Naive thymus-derived CD4-positive, alpha-beta T cell (primary cell): ENCODE measurements at regions of chr5 and their contacts with region 1.

Region 1: DNA sequence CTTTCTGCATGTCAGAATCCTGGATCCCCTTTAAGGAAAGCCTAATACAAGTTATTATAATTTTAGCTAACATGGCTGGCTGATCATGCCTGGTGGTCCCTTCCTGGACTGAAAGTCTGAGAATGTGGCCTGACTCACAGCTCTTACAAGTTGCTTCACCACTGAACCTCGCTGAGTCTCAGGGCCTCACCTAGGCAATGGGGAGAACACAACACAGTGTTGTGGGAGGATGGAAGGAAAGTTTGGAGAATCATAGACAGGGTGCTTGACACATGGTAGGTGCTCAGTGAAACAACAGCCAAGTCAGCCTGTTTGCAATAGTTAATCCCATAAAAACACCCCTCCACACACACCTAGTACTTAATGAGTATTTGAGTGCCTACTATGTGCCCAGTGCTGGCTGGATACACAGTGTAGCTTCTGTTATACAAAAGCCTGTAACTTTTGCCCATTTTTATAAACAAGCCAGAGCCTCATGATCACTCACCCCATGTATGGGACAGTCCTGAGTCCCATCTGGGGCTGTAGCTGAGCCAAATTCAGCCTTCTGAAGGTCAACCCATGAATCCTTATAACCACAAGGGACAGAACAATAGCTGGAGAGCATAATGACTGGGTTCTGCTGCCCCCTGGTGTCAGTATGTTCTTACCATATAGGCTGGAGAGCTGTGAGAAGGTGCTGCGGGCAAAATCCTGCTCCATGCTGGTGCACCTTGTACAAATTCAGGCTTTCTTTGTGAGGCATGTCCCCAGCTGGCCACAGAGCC is 3.9 kb downstream of the ACSL6 start:
- DNase-seq: peak; percentile 47 to 73 (median 64)
- ATAC-seq: peak; percentile 74
- H3K4me3 ChIP-seq: no peak overlapping the region
- H3K4me3 Mint-ChIP-seq: peak overlapping the region in 1 of 10 donors; percentile 3
- H3K27ac ChIP-seq: no peak overlapping the region
- H3K27ac Mint-ChIP-seq: peak overlapping the region in 2 of 9 donors; percentile 3 to 43
- H3K4me1 ChIP-seq: peaks cover 3 to 7% of the 10 kb centered on the region in 2 donors
- H3K4me1 Mint-ChIP-seq: peaks cover 19 to 39% (median 20%) of the 10 kb centered on the region in 7 donors
- H3K27me3 ChIP-seq: no peaks in the 10 kb centered on the region
- H3K27me3 Mint-ChIP-seq: peaks cover 4 to 47% (median 18%) of the 10 kb centered on the region in 5 donors

Region 2: DNA sequence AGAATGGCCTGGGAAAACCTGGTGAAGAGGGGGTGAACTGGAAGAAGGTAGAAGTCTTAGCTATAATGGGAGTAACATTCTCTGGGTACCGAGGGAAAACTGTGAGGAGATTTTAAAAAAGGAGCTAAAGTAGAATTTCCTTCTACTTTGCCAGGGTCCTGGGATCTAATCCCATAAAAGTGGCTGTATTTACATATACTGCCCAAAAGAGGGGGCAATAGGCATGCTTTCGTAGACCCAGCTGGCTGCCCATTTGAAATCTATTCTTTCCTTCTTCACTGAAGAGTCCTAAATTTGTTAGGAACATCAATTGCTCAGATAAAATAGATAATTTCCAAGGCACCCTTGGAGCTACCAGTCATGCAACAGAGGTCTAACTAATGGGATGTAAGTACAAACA is 584.5 kb before region 1 on chr5:
- CTCF ChIA-PET with region 1: interaction called, 4 read pairs
- POLR2A ChIA-PET with region 1: no interaction called
- intact Hi-C with region 1: loop called (anchors 1 to 2 kb)
- DNase-seq: no peak
- ATAC-seq: no peak
- H3K4me3 ChIP-seq: no peak overlapping the region
- H3K4me3 Mint-ChIP-seq: no peak overlapping the region
- H3K27ac ChIP-seq: no peak overlapping the region
- H3K27ac Mint-ChIP-seq: peak overlapping the region in 8 of 9 donors; percentile 40 to 76 (median 60)
- H3K4me1 ChIP-seq: no peaks in the 10 kb centered on the region
- H3K4me1 Mint-ChIP-seq: peaks cover 0 to 24% (median 13%) of the 10 kb centered on the region in 7 donors
- H3K27me3 ChIP-seq: no peaks in the 10 kb centered on the region
- H3K27me3 Mint-ChIP-seq: no peaks in the 10 kb centered on the region

Region 3: DNA sequence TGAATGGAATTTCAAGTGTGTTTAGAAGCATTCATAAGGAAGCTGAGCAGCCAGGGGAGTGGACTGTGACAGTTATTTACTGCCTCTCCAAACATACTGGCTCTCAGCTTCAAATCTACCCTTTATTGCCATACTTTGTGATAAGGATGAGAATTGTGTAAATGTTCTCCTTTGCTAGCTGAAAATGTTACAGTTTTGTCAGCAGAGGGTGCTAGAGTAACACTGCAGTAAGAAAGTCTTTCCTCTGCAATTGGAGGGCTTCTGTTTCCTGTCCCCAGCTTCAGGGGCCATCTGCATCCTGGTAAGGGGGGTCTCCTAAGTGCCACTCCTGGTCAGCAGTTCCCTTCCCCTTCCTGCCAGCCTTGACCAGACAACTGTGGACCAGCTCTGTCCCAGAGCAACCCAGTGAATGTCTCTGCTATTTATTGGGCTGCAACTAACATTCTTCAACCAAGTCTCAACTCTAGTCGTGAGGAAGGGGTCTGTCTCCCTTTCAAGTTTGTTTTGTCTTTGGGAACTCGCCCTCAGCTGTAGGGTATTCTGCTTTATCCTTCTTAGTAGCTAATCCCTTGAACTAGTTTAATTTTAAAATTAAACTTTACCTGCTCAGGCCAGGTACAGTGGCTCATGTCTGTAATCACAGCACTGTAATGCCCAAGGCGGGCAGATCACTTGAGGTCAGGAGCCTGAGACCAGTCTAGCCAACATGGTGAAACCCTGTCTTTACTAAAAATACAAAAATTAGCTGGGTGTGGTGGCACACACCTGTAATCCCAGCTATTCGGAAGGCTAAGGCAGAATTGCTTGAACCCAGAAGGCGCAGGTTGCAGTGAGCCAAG is 417.9 kb before region 1 on chr5:
- CTCF ChIA-PET with region 1: interaction called, 220 read pairs
- POLR2A ChIA-PET with region 1: interaction called, 13 read pairs
- intact Hi-C with region 1: loop called (anchors 1 kb)
- DNase-seq: peak in 8 of 9 donors; percentile 8 to 71 (median 62)
- ATAC-seq: peak; percentile 80
- H3K4me3 ChIP-seq: no peak overlapping the region
- H3K4me3 Mint-ChIP-seq: no peak overlapping the region
- H3K27ac ChIP-seq: peak overlapping the region; percentile 9
- H3K27ac Mint-ChIP-seq: peak overlapping the region; percentile 10 to 75 (median 52)
- H3K4me1 ChIP-seq: peaks cover 4 to 5% of the 10 kb centered on the region in 2 donors
- H3K4me1 Mint-ChIP-seq: peaks cover 21 to 63% (median 58%) of the 10 kb centered on the region in 7 donors
- H3K27me3 ChIP-seq: no peaks in the 10 kb centered on the region
- H3K27me3 Mint-ChIP-seq: no peaks in the 10 kb centered on the region

Region 4: GRCh38 chr5:131671994-131672655 is 335.5 kb before region 1 on chr5:
- CTCF ChIA-PET with region 1: interaction called, 3 read pairs
- POLR2A ChIA-PET with region 1: no interaction called
- intact Hi-C with region 1: loop called in 1 of 2 experiments (anchors 10 kb)
- DNase-seq: no peak
- ATAC-seq: no peak
- H3K4me3 ChIP-seq: no peak overlapping the region
- H3K4me3 Mint-ChIP-seq: no peak overlapping the region
- H3K27ac ChIP-seq: no peak overlapping the region
- H3K27ac Mint-ChIP-seq: peak overlapping the region in 5 of 9 donors; percentile 2 to 56 (median 36)
- H3K4me1 ChIP-seq: no peaks in the 10 kb centered on the region
- H3K4me1 Mint-ChIP-seq: peaks cover 0 to 31% (median 8%) of the 10 kb centered on the region in 7 donors
- H3K27me3 ChIP-seq: no peaks in the 10 kb centered on the region
- H3K27me3 Mint-ChIP-seq: no peaks in the 10 kb centered on the region

Region 5: GRCh38 chr5:131747180-131748105 is 260.1 kb before region 1 on chr5:
- CTCF ChIA-PET with region 1: no interaction called
- POLR2A ChIA-PET with region 1: no interaction called
- intact Hi-C with region 1: loop called in 1 of 2 experiments (anchors 5 kb)
- DNase-seq: peak in 7 of 9 donors; percentile 21 to 64 (median 48)
- ATAC-seq: peak; percentile 80
- H3K4me3 ChIP-seq: no peak overlapping the region
- H3K4me3 Mint-ChIP-seq: peak overlapping the region; percentile 14 to 80 (median 68)
- H3K27ac ChIP-seq: peak overlapping the region; percentile 63
- H3K27ac Mint-ChIP-seq: peak overlapping the region; percentile 84 to 96 (median 89)
- H3K4me1 ChIP-seq: peaks cover 10 to 11% of the 10 kb centered on the region in 2 donors
- H3K4me1 Mint-ChIP-seq: peaks cover 28 to 57% (median 51%) of the 10 kb centered on the region in 7 donors
- H3K27me3 ChIP-seq: no peaks in the 10 kb centered on the region
- H3K27me3 Mint-ChIP-seq: no peaks in the 10 kb centered on the region

Region 6: GRCh38 chr5:131810510-131811249 is 196.9 kb before region 1 on chr5:
- CTCF ChIA-PET with region 1: interaction called, 25 read pairs
- POLR2A ChIA-PET with region 1: interaction called, 3 read pairs
- intact Hi-C with region 1: loop called (anchors 1 kb)
- DNase-seq: peak in 4 of 9 donors; percentile 21 to 25 (median 22)
- ATAC-seq: peak; percentile 52
- H3K4me3 ChIP-seq: no peak overlapping the region
- H3K4me3 Mint-ChIP-seq: no peak overlapping the region
- H3K27ac ChIP-seq: no peak overlapping the region
- H3K27ac Mint-ChIP-seq: no peak overlapping the region
- H3K4me1 ChIP-seq: no peaks in the 10 kb centered on the region
- H3K4me1 Mint-ChIP-seq: peaks cover 0 to 4% (median 0%) of the 10 kb centered on the region in 7 donors
- H3K27me3 ChIP-seq: no peaks in the 10 kb centered on the region
- H3K27me3 Mint-ChIP-seq: peaks cover 0 to 24% (median 0%) of the 10 kb centered on the region in 5 donors